ENCODE measurements at regions of chr12 and their contacts with region 1.

Region 1: GRCh38 chr12:40107098-40107802 is 1.4 kb upstream of the SLC2A13 start:
- DNase-seq: peak; percentile 63 to 70
- ATAC-seq: peak; percentile 40 to 47
- H3K4me3 ChIP-seq: peak overlapping the region; percentile 40 to 85 (median 52)
- H3K27ac ChIP-seq: peak overlapping the region in 1 of 4 donors; percentile 8
- H3K4me1 ChIP-seq: peaks cover 0 to 9% of the 10 kb centered on the region in 2 donors
- H3K27me3 ChIP-seq: no peaks in the 10 kb centered on the region
- CTCF ChIP-seq: peak; percentile 73 to 92 (median 83)
- POLR2A ChIP-seq: no peak

Region 2: DNA sequence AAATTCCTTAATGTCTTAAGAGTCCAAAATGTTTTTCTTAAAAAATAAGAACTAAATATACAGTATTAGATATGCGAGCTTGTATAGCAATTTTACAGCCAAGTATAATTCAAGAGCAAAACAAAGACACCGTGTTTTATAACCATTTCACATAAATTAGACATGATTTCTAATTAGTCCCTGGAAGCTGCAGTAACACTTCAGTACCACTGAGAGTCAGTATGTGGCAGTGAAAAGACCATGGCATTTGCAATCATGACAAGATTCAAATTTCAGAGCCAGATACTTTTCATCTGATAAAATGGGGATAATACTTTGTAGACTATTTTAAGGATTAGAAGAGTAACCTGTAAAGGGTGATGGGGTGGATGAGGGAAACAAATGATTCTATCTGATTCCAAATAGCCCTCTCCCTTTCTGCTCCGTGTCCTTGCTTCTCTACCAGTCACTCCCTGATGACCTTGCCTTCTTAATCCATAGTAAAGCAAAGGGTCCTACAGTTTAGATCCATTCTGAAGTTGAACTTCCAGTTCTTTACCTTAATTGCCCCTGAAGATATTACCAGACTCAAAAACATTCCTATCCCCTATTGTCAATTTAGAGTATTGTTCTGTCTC is 342.2 kb before region 1 on chr12:
- in situ Hi-C with region 1: loop called in 3 of 4 experiments (anchors 25 kb)
- intact Hi-C with region 1: no loop called
- DNase-seq: no peak
- ATAC-seq: no peak
- H3K4me3 ChIP-seq: no peak overlapping the region
- H3K27ac ChIP-seq: no peak overlapping the region
- H3K4me1 ChIP-seq: no peaks in the 10 kb centered on the region
- H3K27me3 ChIP-seq: no peaks in the 10 kb centered on the region
- CTCF ChIP-seq: peak; percentile 7 to 53 (median 29)
- POLR2A ChIP-seq: no peak

Region 3: GRCh38 chr12:40010899-40011774 is 96.1 kb before region 1 on chr12:
- in situ Hi-C with region 1: loop called (anchors 5 to 25 kb)
- intact Hi-C with region 1: loop called (anchors 1 kb)
- DNase-seq: peak; percentile 12 to 46
- ATAC-seq: peak; percentile 93 to 95
- H3K4me3 ChIP-seq: peak overlapping the region in 3 of 4 donors; percentile 33 to 39 (median 34)
- H3K27ac ChIP-seq: peak overlapping the region in 1 of 4 donors; percentile 13
- H3K4me1 ChIP-seq: peaks cover 5% of the 10 kb centered on the region in 2 donors
- H3K27me3 ChIP-seq: no peaks in the 10 kb centered on the region
- CTCF ChIP-seq: peak; percentile 21 to 75 (median 52)
- POLR2A ChIP-seq: no peak

Measured in gastrocnemius medialis (tissue), 4 donors.